ENCODE measurements at regions of chr1 and their contacts with region 1.

Region 1: DNA sequence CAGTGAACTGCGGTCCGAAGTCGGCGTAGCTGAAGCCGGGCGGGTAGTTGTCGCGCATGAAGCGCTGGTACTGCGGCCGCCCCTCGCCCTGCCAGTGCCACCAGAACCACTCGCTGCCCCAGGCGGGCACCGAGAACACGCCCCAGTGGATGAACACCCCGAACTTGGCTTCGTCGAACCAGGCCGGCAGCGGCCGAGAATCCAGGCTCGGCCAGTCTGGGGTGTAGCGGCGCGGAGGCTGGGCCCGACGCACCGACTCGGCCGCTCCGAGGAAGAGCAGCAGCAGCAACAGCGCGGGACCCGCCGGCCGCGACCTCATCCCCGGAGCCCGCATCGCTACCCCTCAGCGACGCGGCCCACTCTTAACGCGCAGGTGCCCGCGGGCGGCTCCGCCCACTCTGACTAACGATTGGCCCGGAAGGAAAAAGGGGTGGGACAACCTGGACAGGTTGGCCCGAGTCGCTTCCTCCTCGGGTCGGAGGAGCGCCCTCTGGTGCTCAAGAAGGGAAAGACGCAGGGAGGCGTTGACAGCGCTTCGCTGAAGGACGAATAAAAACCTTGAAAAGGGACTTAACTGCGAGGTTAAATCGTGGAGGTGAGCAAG is at the start of gene FUCA1:
- DNase-seq: peak; percentile 86 to 96 (median 95)
- ATAC-seq: peak; percentile 99
- H3K4me3 ChIP-seq: peak within 1 kb of the TSS; percentile 81
- H3K4me3 Mint-ChIP-seq: peak within 1 kb of the TSS; percentile 79 to 94 (median 89)
- H3K27ac ChIP-seq: peak within 1 kb of the TSS; percentile 77
- H3K27ac Mint-ChIP-seq: peak within 1 kb of the TSS; percentile 76 to 95 (median 90)
- H3K4me1 ChIP-seq: peaks cover 5 to 15% of the 10 kb centered on the region in 2 donors
- H3K4me1 Mint-ChIP-seq: peaks cover 18 to 38% (median 24%) of the 10 kb centered on the region in 7 donors
- H3K27me3 ChIP-seq: no peaks in the 10 kb centered on the region
- H3K27me3 Mint-ChIP-seq: peaks cover 0 to 15% (median 0%) of the 10 kb centered on the region in 5 donors
- total RNA-seq, gene FUCA1: 4.9 to 62.7 (median 16.3) TPM

Region 2: GRCh38 chr1:23772049-23772853 is 95.8 kb before region 1 on chr1:
- CTCF ChIA-PET with region 1: no interaction called
- POLR2A ChIA-PET with region 1: no interaction called
- intact Hi-C with region 1: loop called (anchors 1 kb)
- DNase-seq: peak; percentile 52 to 84 (median 78)
- ATAC-seq: peak; percentile 85
- H3K4me3 ChIP-seq: no peak overlapping the region
- H3K4me3 Mint-ChIP-seq: peak overlapping the region in 1 of 10 donors; percentile 17
- H3K27ac ChIP-seq: no peak overlapping the region
- H3K27ac Mint-ChIP-seq: peak overlapping the region in 4 of 9 donors; percentile 4 to 53 (median 23)
- H3K4me1 ChIP-seq: peaks cover 5 to 7% of the 10 kb centered on the region in 2 donors
- H3K4me1 Mint-ChIP-seq: peaks cover 2 to 38% (median 29%) of the 10 kb centered on the region in 7 donors
- H3K27me3 ChIP-seq: no peaks in the 10 kb centered on the region
- H3K27me3 Mint-ChIP-seq: no peaks in the 10 kb centered on the region

Region 3: DNA sequence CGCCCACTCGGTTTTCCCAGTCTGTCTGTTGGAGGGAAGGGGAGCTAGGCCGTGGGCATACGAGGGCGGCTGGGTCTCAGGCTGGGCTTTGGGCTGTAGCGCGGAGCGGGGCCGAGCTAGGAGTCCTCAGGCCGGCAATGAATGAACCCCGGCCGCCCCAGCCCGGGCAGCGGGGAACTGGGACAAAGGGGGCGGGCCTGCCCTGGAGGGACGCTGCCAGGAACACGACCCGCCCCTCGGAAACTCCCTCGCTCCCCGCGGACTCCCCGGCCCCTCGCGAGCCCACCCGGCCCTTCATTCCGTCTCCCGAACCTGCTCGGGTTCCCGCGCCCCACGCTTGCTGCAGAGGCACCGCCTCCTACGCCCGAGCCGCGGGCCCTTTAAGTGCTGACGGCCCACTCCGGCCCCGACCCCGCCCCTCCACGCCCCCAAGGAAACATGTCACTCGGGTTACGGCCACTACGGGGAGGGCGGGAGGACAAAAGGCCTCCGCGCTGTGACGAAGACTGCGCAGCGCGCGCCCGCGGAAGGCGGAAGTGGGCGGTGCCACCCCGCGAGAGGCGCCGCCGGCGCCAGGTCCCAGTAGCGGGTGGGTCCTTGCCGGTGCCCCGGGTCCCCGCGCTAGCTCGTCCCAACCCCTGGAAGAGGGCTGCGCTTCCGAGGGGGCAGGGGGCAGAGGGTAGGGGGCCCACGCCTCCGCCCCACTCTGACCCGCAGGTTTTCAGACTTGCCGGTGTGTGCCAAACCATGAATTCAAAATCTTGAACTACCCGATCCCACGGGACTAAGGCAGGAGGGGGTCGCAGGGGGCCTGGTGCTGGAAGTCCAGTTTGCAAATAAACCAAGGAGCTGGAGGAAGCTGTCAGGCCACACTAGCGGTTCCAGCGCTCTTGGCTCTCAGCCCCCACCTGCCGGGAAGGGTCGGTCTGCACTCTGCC is 67.4 kb before region 1 on chr1 and contains the start of gene GALE:
- CTCF ChIA-PET with region 1: no interaction called
- POLR2A ChIA-PET with region 1: interaction called, 4 read pairs
- intact Hi-C with region 1: loop called in 1 of 2 experiments (anchors 1 kb)
- DNase-seq: peak; percentile 87 to 96 (median 94)
- ATAC-seq: peak; percentile 97
- H3K4me3 ChIP-seq: peak within 1 kb of the TSS; percentile 84
- H3K4me3 Mint-ChIP-seq: peak within 1 kb of the TSS; percentile 79 to 94 (median 88)
- H3K27ac ChIP-seq: peak within 1 kb of the TSS; percentile 91
- H3K27ac Mint-ChIP-seq: peak within 1 kb of the TSS; percentile 81 to 95 (median 92)
- H3K4me1 ChIP-seq: peaks cover 7 to 15% of the 10 kb centered on the region in 2 donors
- H3K4me1 Mint-ChIP-seq: peaks cover 6 to 25% (median 15%) of the 10 kb centered on the region in 7 donors
- H3K27me3 ChIP-seq: no peaks in the 10 kb centered on the region
- H3K27me3 Mint-ChIP-seq: no peaks in the 10 kb centered on the region
- total RNA-seq, gene GALE: 8.1 to 21.4 (median 12.7) TPM

Region 4: DNA sequence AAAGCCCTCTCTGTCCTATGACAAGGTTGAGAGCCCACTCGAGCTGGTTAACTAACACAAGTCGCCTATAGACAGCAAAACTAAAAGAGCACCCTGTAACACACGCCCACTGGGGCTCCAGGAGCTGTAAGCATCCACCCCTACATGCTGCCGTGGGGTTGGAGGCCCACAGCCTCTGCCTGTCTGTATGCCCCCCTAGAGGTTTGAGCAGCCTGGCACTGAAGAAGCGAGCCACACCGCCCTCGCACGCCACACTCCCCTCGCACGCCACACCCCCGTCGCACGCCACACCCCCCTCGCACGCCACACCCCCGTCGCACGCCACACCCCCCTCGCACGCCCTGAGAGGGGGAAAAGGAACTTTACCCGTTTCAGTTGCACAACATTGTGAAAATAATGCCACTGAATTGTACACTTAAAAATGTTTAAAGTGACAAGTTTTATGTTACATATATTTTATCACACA is 29.6 kb before region 1 on chr1:
- CTCF ChIA-PET with region 1: no interaction called
- POLR2A ChIA-PET with region 1: interaction called, 3 read pairs
- intact Hi-C with region 1: loop called (anchors 1 to 2 kb)
- DNase-seq: peak; percentile 61 to 81 (median 72)
- ATAC-seq: peak; percentile 100
- H3K4me3 ChIP-seq: peak overlapping the region; percentile 42
- H3K4me3 Mint-ChIP-seq: peak overlapping the region; percentile 73 to 90 (median 84)
- H3K27ac ChIP-seq: no peak overlapping the region
- H3K27ac Mint-ChIP-seq: peak overlapping the region in 4 of 9 donors; percentile 34 to 90 (median 53)
- H3K4me1 ChIP-seq: peaks cover 6% of the 10 kb centered on the region in 2 donors
- H3K4me1 Mint-ChIP-seq: peaks cover 0 to 14% (median 12%) of the 10 kb centered on the region in 7 donors
- H3K27me3 ChIP-seq: no peaks in the 10 kb centered on the region
- H3K27me3 Mint-ChIP-seq: peaks cover 0 to 32% (median 0%) of the 10 kb centered on the region in 5 donors

Region 5: DNA sequence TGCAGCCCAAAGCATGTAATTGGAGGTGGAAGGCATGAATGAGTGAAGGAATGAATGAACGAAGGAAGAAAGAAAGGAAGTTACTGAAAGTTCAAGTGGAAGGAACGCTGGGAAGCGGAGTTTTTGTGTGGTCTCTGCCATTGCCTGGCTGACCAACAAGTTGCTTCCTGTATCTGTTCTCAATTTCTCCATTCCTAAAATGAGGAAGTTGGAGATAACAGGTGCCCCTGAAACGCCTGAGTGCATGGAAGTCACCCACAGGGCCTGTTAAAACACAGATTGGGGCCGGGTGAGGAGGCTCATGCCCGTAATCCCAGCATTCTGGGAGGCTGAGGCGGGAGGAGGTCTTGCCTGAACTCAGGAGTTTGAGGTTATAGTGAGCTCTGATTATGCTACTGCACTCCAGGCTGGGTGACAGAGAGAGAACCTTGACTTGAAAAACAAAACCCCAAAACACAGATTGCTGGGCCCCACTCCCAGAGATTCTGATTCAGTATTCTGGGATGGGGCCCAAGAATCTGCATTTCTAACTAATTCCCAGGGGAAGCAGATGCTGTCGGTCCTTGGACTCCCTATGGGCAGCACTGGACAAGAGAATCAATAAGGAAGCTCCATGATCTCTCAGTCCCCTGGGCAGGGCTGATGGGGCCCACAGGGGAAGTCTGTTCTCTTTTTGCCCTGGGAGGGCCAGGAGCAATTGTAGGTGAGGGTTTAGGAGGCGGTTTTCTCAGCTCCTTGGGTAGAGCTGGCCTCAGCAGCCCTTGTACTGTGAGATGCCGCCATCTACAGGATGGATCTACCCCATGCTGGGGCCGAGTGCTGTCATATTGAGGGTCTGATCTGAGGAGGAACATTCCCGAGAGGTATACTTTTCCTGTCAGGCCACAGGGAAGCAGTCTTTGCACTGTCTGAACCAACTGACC is 48.4 kb after region 1 on chr1:
- CTCF ChIA-PET with region 1: interaction called, 4 read pairs
- POLR2A ChIA-PET with region 1: interaction called, 3 read pairs
- intact Hi-C with region 1: loop called in 1 of 2 experiments (anchors 1 kb)
- DNase-seq: peak; percentile 24 to 66 (median 55)
- ATAC-seq: peak; percentile 95
- H3K4me3 ChIP-seq: no peak overlapping the region
- H3K4me3 Mint-ChIP-seq: no peak overlapping the region
- H3K27ac ChIP-seq: no peak overlapping the region
- H3K27ac Mint-ChIP-seq: peak overlapping the region in 2 of 9 donors; percentile 64 to 72
- H3K4me1 ChIP-seq: peaks cover 7 to 8% of the 10 kb centered on the region in 2 donors
- H3K4me1 Mint-ChIP-seq: peaks cover 10 to 41% (median 30%) of the 10 kb centered on the region in 7 donors
- H3K27me3 ChIP-seq: no peaks in the 10 kb centered on the region
- H3K27me3 Mint-ChIP-seq: peaks cover 0 to 2% (median 0%) of the 10 kb centered on the region in 5 donors

Region 6: GRCh38 chr1:24027838-24028468 is 159.9 kb after region 1 on chr1:
- CTCF ChIA-PET with region 1: no interaction called
- POLR2A ChIA-PET with region 1: no interaction called
- intact Hi-C with region 1: loop called in 1 of 2 experiments (anchors 1 kb)
- DNase-seq: peak in 6 of 9 donors; percentile 4 to 45 (median 26)
- ATAC-seq: no peak
- H3K4me3 ChIP-seq: no peak overlapping the region
- H3K4me3 Mint-ChIP-seq: no peak overlapping the region
- H3K27ac ChIP-seq: no peak overlapping the region
- H3K27ac Mint-ChIP-seq: no peak overlapping the region
- H3K4me1 ChIP-seq: no peaks in the 10 kb centered on the region
- H3K4me1 Mint-ChIP-seq: peaks cover 0 to 8% (median 2%) of the 10 kb centered on the region in 7 donors
- H3K27me3 ChIP-seq: no peaks in the 10 kb centered on the region
- H3K27me3 Mint-ChIP-seq: peaks cover 0 to 2% (median 0%) of the 10 kb centered on the region in 5 donors

Measured in naive thymus-derived CD4-positive, alpha-beta T cell (primary cell).